ENCODE measurements at regions of chr12 and their contacts with region 1.

Region 1: GRCh38 chr12:51217968-51218606 is at the start of gene POU6F1:
- DNase-seq: peak; percentile 82 to 91
- ATAC-seq: peak; percentile 93
- H3K4me3 ChIP-seq: peak within 1 kb of the TSS; percentile 93 to 99
- H3K27ac ChIP-seq: peak within 1 kb of the TSS; percentile 89 to 100
- H3K4me1 ChIP-seq: no peaks in the 10 kb centered on the region
- H3K27me3 ChIP-seq: no peaks in the 10 kb centered on the region
- total RNA-seq, gene POU6F1: 29.3 to 36.5 TPM

Region 2: GRCh38 chr12:50924439-50925341 is 293.4 kb before region 1 on chr12:
- intact Hi-C with region 1: no loop called
- DNase-seq: peak; percentile 92 to 94
- ATAC-seq: peak; percentile 96
- H3K4me3 ChIP-seq: peak overlapping the region; percentile 84 to 95
- H3K27ac ChIP-seq: peak overlapping the region; percentile 82
- H3K4me1 ChIP-seq: peaks cover 0 to 4% of the 10 kb centered on the region in 2 donors
- H3K27me3 ChIP-seq: no peaks in the 10 kb centered on the region

Region 3: GRCh38 chr12:51083126-51083833 is 134.8 kb before region 1 on chr12 and contains the start of gene CSRNP2:
- intact Hi-C with region 1: loop called in 1 of 2 experiments (anchors 5 kb)
- DNase-seq: peak; percentile 98 to 99
- ATAC-seq: peak; percentile 100
- H3K4me3 ChIP-seq: peak within 1 kb of the TSS; percentile 78 to 88
- H3K27ac ChIP-seq: peak within 1 kb of the TSS; percentile 62 to 79
- H3K4me1 ChIP-seq: no peaks in the 10 kb centered on the region
- H3K27me3 ChIP-seq: no peaks in the 10 kb centered on the region
- total RNA-seq, gene CSRNP2: 32.3 to 34.5 TPM

Region 4: GRCh38 chr12:51156245-51156765 is 61.8 kb before region 1 on chr12:
- intact Hi-C with region 1: no loop called
- DNase-seq: no peak
- ATAC-seq: no peak
- H3K4me3 ChIP-seq: no peak overlapping the region
- H3K27ac ChIP-seq: no peak overlapping the region
- H3K4me1 ChIP-seq: no peaks in the 10 kb centered on the region
- H3K27me3 ChIP-seq: no peaks in the 10 kb centered on the region

Region 5: GRCh38 chr12:51172515-51173431 is 45.3 kb before region 1 on chr12 and contains the start of gene TFCP2:
- intact Hi-C with region 1: loop called in 1 of 2 experiments (anchors 5 kb)
- DNase-seq: peak; percentile 98 to 99
- ATAC-seq: peak; percentile 99
- H3K4me3 ChIP-seq: peak within 1 kb of the TSS; percentile 44 to 65
- H3K27ac ChIP-seq: peak within 1 kb of the TSS; percentile 78 to 83
- H3K4me1 ChIP-seq: no peaks in the 10 kb centered on the region
- H3K27me3 ChIP-seq: no peaks in the 10 kb centered on the region
- total RNA-seq, gene TFCP2: 15.6 to 25.4 TPM

Measured in aorta (tissue), 5 donors.